ENCODE measurements at regions of chr6 and their contacts with region 1.

Region 1: GRCh38 chr6:28896505-28897368 is 27.0 kb downstream of the TRIM27 start:
- DNase-seq: peak; percentile 54 to 74
- ATAC-seq: peak; percentile 49 to 68 (median 58)
- H3K4me3 ChIP-seq: peak overlapping the region; percentile 73
- H3K27ac ChIP-seq: peak overlapping the region; percentile 91
- H3K4me1 ChIP-seq: peaks cover 6% of the 10 kb centered on the region
- H3K27me3 ChIP-seq: no peaks in the 10 kb centered on the region
- CTCF ChIP-seq: peak; percentile 34

Region 2: GRCh38 chr6:28940858-28941680 is 44.3 kb after region 1 on chr6:
- intact Hi-C with region 1: loop called in 1 of 2 experiments (anchors 1 kb)
- DNase-seq: peak; percentile 51 to 67
- ATAC-seq: peak; percentile 78 to 89 (median 86)
- H3K4me3 ChIP-seq: peak overlapping the region; percentile 71
- H3K27ac ChIP-seq: peak overlapping the region; percentile 48
- H3K4me1 ChIP-seq: peaks cover 16% of the 10 kb centered on the region
- H3K27me3 ChIP-seq: peaks cover 0 to 23% (median 0%) of the 10 kb centered on the region in 3 donors
- CTCF ChIP-seq: no peak